ENCODE measurements at regions of chr6 and their contacts with region 1.

Region 1: DNA sequence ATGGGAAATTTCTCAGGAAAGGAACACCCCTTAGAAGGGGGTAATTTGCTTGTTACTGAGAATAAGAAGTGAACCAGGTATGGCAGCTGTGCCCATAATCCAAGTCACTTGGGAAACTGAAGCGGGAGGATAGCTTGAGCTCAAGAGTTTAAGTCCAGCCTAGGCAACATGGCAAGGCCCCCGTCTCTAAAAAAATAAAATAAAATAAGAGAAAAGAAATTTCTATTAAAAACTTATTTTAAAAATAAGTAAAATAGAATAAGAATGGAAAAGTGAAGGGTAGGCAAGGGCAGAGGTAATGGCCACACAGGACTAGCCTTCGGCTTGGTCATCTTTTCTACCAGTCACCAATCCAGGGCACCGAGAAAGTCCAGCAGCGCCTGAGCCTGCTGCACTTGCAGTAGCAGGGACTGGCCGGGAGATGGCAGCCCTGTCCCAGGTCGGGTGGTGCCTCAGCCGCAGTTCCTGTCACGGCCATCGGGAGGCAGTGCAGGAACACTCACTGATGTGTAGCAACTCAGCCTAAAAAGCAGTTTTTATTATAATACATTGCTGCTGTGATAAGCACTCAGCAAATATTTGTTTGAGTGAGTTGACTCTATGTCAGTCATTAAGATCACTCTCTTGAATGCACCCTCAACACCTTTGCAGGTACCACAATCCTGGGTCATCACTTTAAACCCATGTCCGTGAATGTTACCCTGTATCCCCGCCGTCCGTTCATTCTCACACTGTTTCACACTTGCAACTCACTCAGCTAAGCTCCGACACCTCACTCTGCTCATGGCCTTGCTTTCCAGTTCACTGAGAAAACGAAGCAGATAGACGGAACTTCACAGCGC is 23.2 kb upstream of the GCM1 start:
- DNase-seq: peak; percentile 95
- ATAC-seq: peak; percentile 98
- H3K4me3 Mint-ChIP-seq: no peak overlapping the region
- H3K27ac Mint-ChIP-seq: no peak overlapping the region
- H3K4me1 Mint-ChIP-seq: no peaks in the 10 kb centered on the region
- H3K27me3 Mint-ChIP-seq: no peaks in the 10 kb centered on the region

Region 2: GRCh38 chr6:53410508-53411258 is 238.9 kb after region 1 on chr6:
- CTCF ChIA-PET with region 1: interaction called, 23 read pairs
- POLR2A ChIA-PET with region 1: interaction called, 3 read pairs
- intact Hi-C with region 1: loop called (anchors 1 kb)
- DNase-seq: peak; percentile 74
- ATAC-seq: peak; percentile 94
- H3K4me3 Mint-ChIP-seq: no peak overlapping the region
- H3K27ac Mint-ChIP-seq: no peak overlapping the region
- H3K4me1 Mint-ChIP-seq: no peaks in the 10 kb centered on the region
- H3K27me3 Mint-ChIP-seq: no peaks in the 10 kb centered on the region

Region 3: GRCh38 chr6:53476964-53477363 is 305.1 kb after region 1 on chr6:
- CTCF ChIA-PET with region 1: interaction called, 69 read pairs
- POLR2A ChIA-PET with region 1: no interaction called
- intact Hi-C with region 1: no loop called
- DNase-seq: no peak
- ATAC-seq: no peak
- H3K4me3 Mint-ChIP-seq: no peak overlapping the region
- H3K27ac Mint-ChIP-seq: no peak overlapping the region
- H3K4me1 Mint-ChIP-seq: peaks cover 9% of the 10 kb centered on the region
- H3K27me3 Mint-ChIP-seq: no peaks in the 10 kb centered on the region

Region 4: GRCh38 chr6:53651764-53652401 is 480.1 kb after region 1 on chr6:
- CTCF ChIA-PET with region 1: interaction called, 5 read pairs
- POLR2A ChIA-PET with region 1: no interaction called
- intact Hi-C with region 1: loop called in 1 of 2 experiments (anchors 5 kb)
- DNase-seq: peak; percentile 87
- ATAC-seq: peak; percentile 95
- H3K4me3 Mint-ChIP-seq: peak overlapping the region; percentile 81
- H3K27ac Mint-ChIP-seq: peak overlapping the region; percentile 82
- H3K4me1 Mint-ChIP-seq: peaks cover 28% of the 10 kb centered on the region
- H3K27me3 Mint-ChIP-seq: no peaks in the 10 kb centered on the region

Measured in activated CD4-positive, alpha-beta T cell treated with anti-CD3 and anti-CD28 coated beads for 36 hours (primary cell).